ENCODE measurements at regions of chr7 and their contacts with region 1.

Region 1: DNA sequence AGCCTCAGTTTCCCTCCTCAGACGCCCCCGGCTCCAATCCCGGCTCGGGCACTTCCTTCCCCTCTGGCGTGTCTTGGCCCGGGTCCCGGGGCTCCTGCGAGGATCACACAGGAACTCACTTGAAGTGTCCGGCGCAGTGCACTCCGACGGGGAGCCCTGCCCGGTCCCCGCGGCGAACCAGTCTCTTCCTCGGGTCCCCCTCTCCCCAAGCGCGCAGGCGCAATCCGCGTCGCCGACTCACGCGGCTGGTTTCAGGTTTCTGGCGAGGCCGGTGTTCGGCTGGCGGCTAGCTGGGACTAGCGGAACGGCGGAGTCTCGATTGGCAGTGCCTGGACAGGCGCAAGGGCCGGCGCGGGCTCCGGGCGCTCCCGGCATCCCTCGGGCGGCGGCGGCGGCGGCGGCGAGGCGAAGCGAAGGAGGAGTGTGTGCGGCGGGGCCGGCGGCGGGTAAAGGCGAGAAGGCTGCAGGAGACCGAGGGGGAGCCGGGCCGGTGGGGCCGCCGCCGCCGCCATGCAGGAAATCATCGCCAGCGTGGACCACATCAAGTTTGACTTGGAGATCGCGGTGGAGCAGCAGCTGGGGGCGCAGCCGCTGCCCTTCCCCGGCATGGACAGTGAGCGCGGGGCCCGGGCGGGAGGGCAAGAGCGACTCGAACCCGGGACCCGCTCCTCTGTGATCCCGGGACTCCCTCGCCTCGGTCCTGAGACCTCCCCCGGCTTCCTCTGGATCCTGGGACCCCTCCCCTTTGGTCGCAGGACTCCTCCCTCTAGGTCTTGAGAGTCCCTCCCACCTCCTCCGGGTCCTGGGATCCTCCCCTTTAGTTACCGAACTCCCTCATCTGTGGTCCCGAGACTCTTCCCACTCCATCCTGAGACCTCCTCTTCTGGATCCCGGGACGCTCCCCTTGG is at the starts of genes CPSF4 and PTCD1:
- DNase-seq: peak; percentile 76 to 95 (median 86)
- ATAC-seq: peak; percentile 75
- H3K4me3 ChIP-seq: peak within 1 kb of the TSS; percentile 78
- H3K4me3 Mint-ChIP-seq: peak within 1 kb of the TSS; percentile 99
- H3K27ac ChIP-seq: peak within 1 kb of the TSS; percentile 69 to 80
- H3K27ac Mint-ChIP-seq: peak within 1 kb of the TSS; percentile 83
- H3K4me1 ChIP-seq: peaks cover 30% of the 10 kb centered on the region
- H3K4me1 Mint-ChIP-seq: peaks cover 31% of the 10 kb centered on the region
- H3K27me3 ChIP-seq: no peaks in the 10 kb centered on the region
- H3K27me3 Mint-ChIP-seq: no peaks in the 10 kb centered on the region
- CTCF ChIP-seq: no peak
- total RNA-seq, gene CPSF4: 28.1 to 31.7 TPM
- total RNA-seq, gene PTCD1: 4.8 to 5.3 TPM

Region 2: DNA sequence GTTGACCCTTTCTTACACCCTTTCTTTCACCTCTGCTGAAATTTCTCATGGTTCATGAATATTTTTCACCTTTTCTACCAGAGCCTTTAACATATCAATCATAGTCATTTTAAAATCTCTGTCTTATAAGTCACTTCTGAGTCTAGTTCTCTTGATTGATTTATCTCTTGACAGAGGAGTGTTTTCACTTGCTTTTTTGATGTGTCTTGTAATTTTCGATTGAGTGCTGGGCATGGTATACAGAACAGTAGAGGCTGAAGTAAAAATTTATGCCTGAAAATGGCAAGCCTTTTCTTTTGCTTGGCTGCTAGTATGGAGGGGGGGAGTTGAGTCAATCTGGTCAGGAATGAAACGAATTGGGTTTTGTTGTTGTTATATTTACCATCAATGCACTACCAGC is 862.9 kb before region 1 on chr7:
- CTCF ChIA-PET with region 1: no interaction called
- POLR2A ChIA-PET with region 1: no interaction called
- intact Hi-C with region 1: no loop called
- DNase-seq: no peak
- ATAC-seq: no peak
- H3K4me3 ChIP-seq: no peak overlapping the region
- H3K4me3 Mint-ChIP-seq: no peak overlapping the region
- H3K27ac ChIP-seq: no peak overlapping the region
- H3K27ac Mint-ChIP-seq: no peak overlapping the region
- H3K4me1 ChIP-seq: no peaks in the 10 kb centered on the region
- H3K4me1 Mint-ChIP-seq: no peaks in the 10 kb centered on the region
- H3K27me3 ChIP-seq: no peaks in the 10 kb centered on the region
- H3K27me3 Mint-ChIP-seq: peaks cover under 1% of the 10 kb centered on the region
- CTCF ChIP-seq: no peak

Region 3: DNA sequence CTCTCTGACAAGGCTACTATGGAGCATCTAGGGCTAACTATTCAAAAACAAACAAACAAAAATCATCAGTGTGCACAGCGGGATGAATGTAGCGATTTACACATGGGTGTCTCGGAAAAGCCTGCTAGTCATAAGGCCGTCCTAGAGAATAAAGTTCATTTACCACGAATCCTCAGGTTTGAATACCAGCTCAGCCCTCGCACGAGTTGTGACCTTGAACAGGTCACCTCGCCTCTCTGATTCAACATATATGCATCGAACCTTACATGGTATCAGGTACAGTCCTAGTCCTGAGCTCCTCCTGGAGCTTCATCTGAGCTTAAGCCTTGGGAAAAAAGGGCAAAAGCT is 26.6 kb after region 1 on chr7:
- CTCF ChIA-PET with region 1: no interaction called
- POLR2A ChIA-PET with region 1: interaction called, 3 read pairs
- intact Hi-C with region 1: loop called in 1 of 2 experiments (anchors 2 kb)
- DNase-seq: no peak
- ATAC-seq: peak; percentile 7
- H3K4me3 ChIP-seq: peak overlapping the region; percentile 92
- H3K4me3 Mint-ChIP-seq: peak overlapping the region; percentile 92
- H3K27ac ChIP-seq: peak overlapping the region; percentile 64 to 68
- H3K27ac Mint-ChIP-seq: peak overlapping the region; percentile 91
- H3K4me1 ChIP-seq: peaks cover 51% of the 10 kb centered on the region
- H3K4me1 Mint-ChIP-seq: peaks cover 35% of the 10 kb centered on the region
- H3K27me3 ChIP-seq: no peaks in the 10 kb centered on the region
- H3K27me3 Mint-ChIP-seq: no peaks in the 10 kb centered on the region
- CTCF ChIP-seq: no peak

Region 4: GRCh38 chr7:99472561-99473243 is 33.9 kb after region 1 on chr7 and contains the start of gene ZNF789:
- CTCF ChIA-PET with region 1: no interaction called
- POLR2A ChIA-PET with region 1: no interaction called
- intact Hi-C with region 1: loop called in 1 of 2 experiments (anchors 2 kb)
- DNase-seq: peak; percentile 97 to 98 (median 98)
- ATAC-seq: peak; percentile 95
- H3K4me3 ChIP-seq: peak within 1 kb of the TSS; percentile 75
- H3K4me3 Mint-ChIP-seq: peak within 1 kb of the TSS; percentile 95
- H3K27ac ChIP-seq: peak within 1 kb of the TSS; percentile 78 to 81
- H3K27ac Mint-ChIP-seq: peak within 1 kb of the TSS; percentile 90
- H3K4me1 ChIP-seq: peaks cover 38% of the 10 kb centered on the region
- H3K4me1 Mint-ChIP-seq: peaks cover 40% of the 10 kb centered on the region
- H3K27me3 ChIP-seq: no peaks in the 10 kb centered on the region
- H3K27me3 Mint-ChIP-seq: no peaks in the 10 kb centered on the region
- CTCF ChIP-seq: no peak
- total RNA-seq, gene ZNF789: 11.5 to 13.5 TPM

Region 5: GRCh38 chr7:99579956-99580777 is 141.3 kb after region 1 on chr7:
- CTCF ChIA-PET with region 1: no interaction called
- POLR2A ChIA-PET with region 1: no interaction called
- intact Hi-C with region 1: loop called in 1 of 2 experiments (anchors 1 kb)
- DNase-seq: peak; percentile 32 to 78 (median 58)
- ATAC-seq: peak; percentile 90
- H3K4me3 ChIP-seq: peak overlapping the region; percentile 57
- H3K4me3 Mint-ChIP-seq: peak overlapping the region; percentile 92
- H3K27ac ChIP-seq: no peak overlapping the region
- H3K27ac Mint-ChIP-seq: peak overlapping the region; percentile 73
- H3K4me1 ChIP-seq: peaks cover 14% of the 10 kb centered on the region
- H3K4me1 Mint-ChIP-seq: peaks cover 26% of the 10 kb centered on the region
- H3K27me3 ChIP-seq: no peaks in the 10 kb centered on the region
- H3K27me3 Mint-ChIP-seq: no peaks in the 10 kb centered on the region
- CTCF ChIP-seq: peak; percentile 54